ENCODE measurements at regions of chr4 and their contacts with region 1.

Region 1: GRCh38 chr4:128141866-128142265 is 80.8 kb downstream of the LARP1B start:
- DNase-seq: no peak
- ATAC-seq: no peak
- H3K4me3 ChIP-seq: no peak overlapping the region
- H3K27ac ChIP-seq: no peak overlapping the region
- H3K4me1 ChIP-seq: no peaks in the 10 kb centered on the region
- H3K27me3 ChIP-seq: no peaks in the 10 kb centered on the region
- CTCF ChIP-seq: no peak
- POLR2A ChIP-seq: no peak
- RAD21 ChIP-seq: no peak

Region 2: GRCh38 chr4:127574643-127575042 is 567.2 kb before region 1 on chr4:
- CTCF ChIA-PET with region 1: no interaction called
- POLR2A ChIA-PET with region 1: no interaction called
- RAD21 ChIA-PET with region 1: no interaction called
- intact Hi-C with region 1: no loop called
- DNase-seq: no peak
- ATAC-seq: no peak
- H3K4me3 ChIP-seq: no peak overlapping the region
- H3K27ac ChIP-seq: no peak overlapping the region
- H3K4me1 ChIP-seq: no peaks in the 10 kb centered on the region
- H3K27me3 ChIP-seq: no peaks in the 10 kb centered on the region
- CTCF ChIP-seq: no peak
- POLR2A ChIP-seq: no peak
- RAD21 ChIP-seq: no peak

Region 3: GRCh38 chr4:128123036-128123435 is 18.8 kb before region 1 on chr4:
- CTCF ChIA-PET with region 1: no interaction called
- POLR2A ChIA-PET with region 1: no interaction called
- RAD21 ChIA-PET with region 1: no interaction called
- intact Hi-C with region 1: loop called (anchors 2 kb)
- DNase-seq: no peak
- ATAC-seq: no peak
- H3K4me3 ChIP-seq: no peak overlapping the region
- H3K27ac ChIP-seq: no peak overlapping the region
- H3K4me1 ChIP-seq: no peaks in the 10 kb centered on the region
- H3K27me3 ChIP-seq: no peaks in the 10 kb centered on the region
- CTCF ChIP-seq: no peak
- POLR2A ChIP-seq: no peak
- RAD21 ChIP-seq: no peak

Region 4: DNA sequence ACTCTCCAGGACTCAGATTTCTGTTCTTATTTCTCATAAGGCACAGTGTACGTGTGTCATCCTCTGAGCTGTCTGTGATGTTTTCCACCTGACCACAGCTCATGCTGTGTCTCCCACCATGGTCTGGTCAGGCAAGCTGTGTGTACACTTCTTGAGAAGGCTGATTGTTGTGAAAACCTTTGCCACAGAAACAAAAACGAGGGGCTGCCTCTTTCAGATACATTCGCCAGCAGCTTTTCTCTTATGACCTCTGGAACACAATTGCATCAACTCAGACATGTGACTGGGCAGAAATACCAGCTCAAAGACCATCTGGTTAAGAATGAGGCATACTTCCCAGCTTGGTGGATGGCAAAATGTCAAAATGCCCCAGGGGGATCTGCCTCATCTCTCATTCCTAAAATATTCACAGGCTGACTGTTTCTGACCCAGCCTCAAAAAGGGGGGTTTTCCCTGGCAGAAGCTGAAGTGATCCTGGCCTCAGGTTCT is 99.6 kb after region 1 on chr4:
- CTCF ChIA-PET with region 1: no interaction called
- POLR2A ChIA-PET with region 1: no interaction called
- RAD21 ChIA-PET with region 1: no interaction called
- intact Hi-C with region 1: no loop called
- DNase-seq: no peak
- ATAC-seq: no peak
- H3K4me3 ChIP-seq: no peak overlapping the region
- H3K27ac ChIP-seq: no peak overlapping the region
- H3K4me1 ChIP-seq: peaks cover 0 to 7% of the 10 kb centered on the region in 2 experiments; a peak in 1 of 4 replicates
- H3K27me3 ChIP-seq: no peaks in the 10 kb centered on the region
- CTCF ChIP-seq: no peak
- POLR2A ChIP-seq: no peak
- RAD21 ChIP-seq: no peak